ENCODE measurements at regions of chr7 and their contacts with region 1.

Region 1: GRCh38 chr7:102272075-102272917 is 14.4 kb upstream of the SH2B2 start:
- DNase-seq: peak; percentile 77 to 93 (median 86)
- H3K4me3 ChIP-seq: peak overlapping the region in 4 of 59 donors; percentile 1 to 28 (median 16)
- H3K27ac ChIP-seq: peak overlapping the region in 1 of 59 donors; percentile 31
- H3K27me3 ChIP-seq: no peaks in the 10 kb centered on the region
- CTCF ChIP-seq: peak; percentile 79 to 99 (median 95)

Region 2: GRCh38 chr7:101542527-101543241 is 729.6 kb before region 1 on chr7:
- intact Hi-C with region 1: loop called (anchors 1 to 10 kb)
- DNase-seq: peak in 9 of 10 donors; percentile 55 to 81 (median 70)
- H3K4me3 ChIP-seq: no peak overlapping the region
- H3K27ac ChIP-seq: no peak overlapping the region
- H3K27me3 ChIP-seq: no peaks in the 10 kb centered on the region
- CTCF ChIP-seq: peak; percentile 73 to 95 (median 87)

Region 3: DNA sequence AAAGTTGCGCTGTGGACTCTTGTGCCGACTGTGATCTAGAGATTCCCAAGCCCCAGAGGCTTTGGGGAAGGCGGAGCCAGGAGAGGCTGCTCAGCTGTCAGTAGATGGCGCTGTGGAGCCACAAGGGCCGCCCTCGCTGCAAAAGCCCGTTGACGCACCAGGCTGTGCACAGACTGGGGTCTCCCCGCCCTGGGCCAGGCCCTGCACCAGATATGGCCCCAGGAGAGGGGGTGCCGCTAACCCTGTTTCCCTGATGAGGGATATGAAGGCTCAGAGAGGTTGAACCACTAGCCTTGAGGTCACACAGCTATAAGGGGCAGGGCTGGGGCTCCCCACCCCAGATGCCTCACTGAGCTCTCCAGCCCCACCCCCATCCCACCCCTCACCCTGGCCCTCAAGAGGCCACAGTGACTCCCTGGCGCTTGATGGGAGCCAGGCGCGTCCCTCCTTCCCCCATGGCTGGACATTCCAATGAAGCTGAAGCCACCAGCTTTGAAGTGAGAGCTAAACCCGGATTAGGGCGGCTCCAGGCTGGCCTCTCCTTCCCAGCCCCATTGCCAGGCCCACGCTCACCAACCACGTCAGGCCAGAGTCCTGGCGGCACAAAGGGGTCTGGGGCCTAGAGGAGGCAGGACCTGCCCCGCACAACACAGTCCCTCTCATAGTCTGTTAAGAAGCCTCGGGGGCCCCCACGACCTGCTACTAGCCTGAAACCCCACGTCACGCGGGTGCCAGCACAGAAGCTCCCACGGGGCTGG is 669.6 kb before region 1 on chr7:
- intact Hi-C with region 1: loop called (anchors 2 to 10 kb)
- DNase-seq: peak; percentile 58 to 84 (median 74)
- H3K4me3 ChIP-seq: peak overlapping the region in 3 of 59 donors; percentile 4 to 18 (median 13)
- H3K27ac ChIP-seq: no peak overlapping the region
- H3K27me3 ChIP-seq: peaks cover 0 to 4% (median 0%) of the 10 kb centered on the region in 45 donors
- CTCF ChIP-seq: peak; percentile 25 to 89 (median 79)

Region 4: DNA sequence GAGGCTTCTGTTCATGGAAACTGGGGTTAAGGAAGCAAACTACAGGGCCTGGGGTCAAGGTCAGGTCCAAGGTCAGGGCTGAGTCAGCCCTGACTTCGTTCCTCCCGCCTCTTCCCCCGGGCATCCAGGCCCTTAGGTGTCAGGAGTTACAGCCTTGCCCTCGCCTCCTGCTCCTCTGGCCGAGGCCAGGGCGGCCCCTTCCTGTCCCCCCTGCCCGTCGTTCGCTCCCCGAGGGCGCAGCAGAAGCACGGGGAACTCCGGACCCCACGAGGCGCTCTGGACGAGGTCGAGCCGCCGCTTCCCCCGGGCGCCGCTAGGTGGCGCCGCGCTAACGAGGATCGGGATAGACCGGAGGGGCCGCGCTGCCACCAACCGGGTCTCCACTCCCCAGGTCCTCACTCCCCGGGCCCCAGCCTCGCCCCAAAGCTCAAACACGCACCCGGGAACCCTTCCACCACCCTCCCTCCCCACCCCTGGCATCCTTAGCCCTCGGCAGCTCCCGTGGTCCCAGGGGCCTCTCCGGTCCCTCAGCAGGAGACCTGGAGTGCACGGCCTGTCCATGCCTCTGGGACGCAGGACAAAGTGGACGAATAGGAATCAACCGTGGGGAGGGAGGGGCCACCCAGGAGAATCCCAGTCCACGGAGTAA is 584.0 kb before region 1 on chr7:
- intact Hi-C with region 1: loop called (anchors 1 to 2 kb)
- DNase-seq: peak; percentile 58 to 82 (median 67)
- H3K4me3 ChIP-seq: peak overlapping the region in 42 of 59 donors; percentile 1 to 51 (median 34)
- H3K27ac ChIP-seq: no peak overlapping the region
- H3K27me3 ChIP-seq: peaks cover 0 to 3% (median 0%) of the 10 kb centered on the region in 45 donors
- CTCF ChIP-seq: peak; percentile 74 to 98 (median 96)

Region 5: GRCh38 chr7:101953248-101953819 is 319.0 kb before region 1 on chr7:
- intact Hi-C with region 1: no loop called
- DNase-seq: no peak
- H3K4me3 ChIP-seq: no peak overlapping the region
- H3K27ac ChIP-seq: peak overlapping the region in 1 of 59 donors; percentile 17
- H3K27me3 ChIP-seq: no peaks in the 10 kb centered on the region
- CTCF ChIP-seq: no peak

Region 6: GRCh38 chr7:102079140-102080018 is 192.9 kb before region 1 on chr7:
- intact Hi-C with region 1: no loop called
- DNase-seq: peak in 1 of 10 donors; percentile 39
- H3K4me3 ChIP-seq: peak overlapping the region in 49 of 59 donors; percentile 3 to 62 (median 39)
- H3K27ac ChIP-seq: peak overlapping the region in 51 of 59 donors; percentile 6 to 82 (median 64)
- H3K27me3 ChIP-seq: no peaks in the 10 kb centered on the region
- CTCF ChIP-seq: no peak

Measured in dorsolateral prefrontal cortex (tissue), 120 donors.